ENCODE measurements at regions of chr20 and their contacts with region 1.

Region 1: GRCh38 chr20:63309261-63310071 is 16.5 kb downstream of the COL20A1 start:
- DNase-seq: peak; percentile 33
- H3K4me3 Mint-ChIP-seq: no peak overlapping the region
- H3K27ac Mint-ChIP-seq: no peak overlapping the region
- H3K4me1 Mint-ChIP-seq: no peaks in the 10 kb centered on the region
- H3K27me3 Mint-ChIP-seq: peaks cover 10% of the 10 kb centered on the region

Region 2: GRCh38 chr20:63298731-63299312 is 10.6 kb before region 1 on chr20:
- CTCF ChIA-PET with region 1: interaction called, 12 read pairs
- POLR2A ChIA-PET with region 1: no interaction called
- intact Hi-C with region 1: no loop called
- DNase-seq: no peak
- H3K4me3 Mint-ChIP-seq: no peak overlapping the region
- H3K27ac Mint-ChIP-seq: no peak overlapping the region
- H3K4me1 Mint-ChIP-seq: peaks cover 11% of the 10 kb centered on the region
- H3K27me3 Mint-ChIP-seq: peaks cover 22% of the 10 kb centered on the region

Region 3: DNA sequence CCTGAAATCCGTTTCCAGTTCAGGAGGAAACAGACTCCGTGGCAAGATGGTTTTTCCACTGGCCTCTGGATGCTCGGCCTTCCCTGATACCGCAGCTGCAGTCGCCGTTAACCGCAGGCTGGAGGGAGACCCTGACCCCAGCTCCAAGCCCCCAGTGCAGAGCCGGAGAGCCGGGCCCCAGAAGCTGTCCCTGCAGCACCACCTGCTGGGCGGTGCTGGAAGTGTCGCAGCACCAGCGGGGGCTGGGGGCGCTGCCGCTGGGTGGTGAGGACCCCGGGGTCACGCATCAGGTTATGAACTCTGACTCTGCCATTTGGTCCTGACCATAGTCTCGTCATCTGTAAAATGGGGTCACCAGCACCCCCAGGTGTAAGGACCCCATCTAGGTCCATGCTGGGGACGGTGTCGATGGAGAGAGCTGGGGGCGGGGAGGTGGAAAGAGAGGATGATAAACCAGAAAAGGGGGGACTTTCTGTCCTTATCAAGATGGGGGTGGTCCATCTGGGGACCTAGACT is 72.4 kb after region 1 on chr20:
- CTCF ChIA-PET with region 1: interaction called, 64 read pairs
- POLR2A ChIA-PET with region 1: no interaction called
- intact Hi-C with region 1: no loop called
- DNase-seq: peak; percentile 35
- H3K4me3 Mint-ChIP-seq: no peak overlapping the region
- H3K27ac Mint-ChIP-seq: no peak overlapping the region
- H3K4me1 Mint-ChIP-seq: no peaks in the 10 kb centered on the region
- H3K27me3 Mint-ChIP-seq: peaks cover 9% of the 10 kb centered on the region